ENCODE measurements at regions of chr17 and their contacts with region 1.

Region 1: GRCh38 chr17:43832976-43833829 is at the start of gene MPP3:
- DNase-seq: peak; percentile 34
- H3K4me3 Mint-ChIP-seq: peak within 1 kb of the TSS; percentile 72
- H3K27ac Mint-ChIP-seq: no peak within 1 kb of the TSS
- H3K4me1 Mint-ChIP-seq: peaks cover 15% of the 10 kb centered on the region
- H3K27me3 Mint-ChIP-seq: peaks cover 28% of the 10 kb centered on the region
- total RNA-seq, gene MPP3: 0.30 to 0.33 TPM

Region 2: DNA sequence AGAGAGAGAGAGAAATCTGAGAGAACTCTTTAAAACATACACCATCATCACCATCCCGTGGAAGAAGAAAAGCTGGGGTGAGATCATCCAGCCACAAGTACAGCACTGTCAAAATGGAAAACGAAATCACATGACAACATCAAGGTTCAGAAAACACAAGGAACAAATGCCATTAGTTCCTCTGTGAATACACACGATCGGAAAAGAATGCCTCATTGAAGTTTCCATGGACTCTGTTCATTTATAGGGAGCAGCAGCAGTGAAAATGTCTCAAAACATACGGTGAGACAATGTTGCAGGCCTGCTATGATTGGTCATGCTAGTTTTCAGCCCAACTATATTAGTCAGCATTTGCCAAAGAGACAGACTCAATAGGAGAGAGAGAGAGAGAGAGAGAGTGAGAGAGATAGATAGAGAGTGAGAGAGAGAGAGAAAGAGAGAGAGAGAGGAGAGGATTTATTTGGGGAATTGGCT is 48.5 kb before region 1 on chr17:
- CTCF ChIA-PET with region 1: no interaction called
- intact Hi-C with region 1: loop called (anchors 5 kb)
- DNase-seq: no peak
- H3K4me3 Mint-ChIP-seq: no peak overlapping the region
- H3K27ac Mint-ChIP-seq: no peak overlapping the region
- H3K4me1 Mint-ChIP-seq: no peaks in the 10 kb centered on the region
- H3K27me3 Mint-ChIP-seq: peaks cover 13% of the 10 kb centered on the region

Region 3: GRCh38 chr17:44095642-44096496 is 262.7 kb after region 1 on chr17:
- CTCF ChIA-PET with region 1: no interaction called
- intact Hi-C with region 1: no loop called
- DNase-seq: peak; percentile 15
- H3K4me3 Mint-ChIP-seq: no peak overlapping the region
- H3K27ac Mint-ChIP-seq: no peak overlapping the region
- H3K4me1 Mint-ChIP-seq: peaks cover 10% of the 10 kb centered on the region
- H3K27me3 Mint-ChIP-seq: no peaks in the 10 kb centered on the region